Activated naive CD8-positive, alpha-beta T cell treated with anti-CD3 and anti-CD28 coated beads, Interleukin-2, amount 10 ng/mL, durations not matched to agents 7 days and 5 days (primary cell): ENCODE measurements at regions of chr12 and their contacts with region 1.

Region 1: GRCh38 chr12:47207340-47207717 is 127.6 kb upstream of the AMIGO2 start:
- DNase-seq: peak; percentile 62
- ATAC-seq: peak; percentile 67
- H3K4me3 Mint-ChIP-seq: peak overlapping the region; percentile 87
- H3K27ac Mint-ChIP-seq: peak overlapping the region; percentile 88
- H3K4me1 Mint-ChIP-seq: peaks cover 62% of the 10 kb centered on the region
- H3K27me3 Mint-ChIP-seq: no peaks in the 10 kb centered on the region

Region 2: DNA sequence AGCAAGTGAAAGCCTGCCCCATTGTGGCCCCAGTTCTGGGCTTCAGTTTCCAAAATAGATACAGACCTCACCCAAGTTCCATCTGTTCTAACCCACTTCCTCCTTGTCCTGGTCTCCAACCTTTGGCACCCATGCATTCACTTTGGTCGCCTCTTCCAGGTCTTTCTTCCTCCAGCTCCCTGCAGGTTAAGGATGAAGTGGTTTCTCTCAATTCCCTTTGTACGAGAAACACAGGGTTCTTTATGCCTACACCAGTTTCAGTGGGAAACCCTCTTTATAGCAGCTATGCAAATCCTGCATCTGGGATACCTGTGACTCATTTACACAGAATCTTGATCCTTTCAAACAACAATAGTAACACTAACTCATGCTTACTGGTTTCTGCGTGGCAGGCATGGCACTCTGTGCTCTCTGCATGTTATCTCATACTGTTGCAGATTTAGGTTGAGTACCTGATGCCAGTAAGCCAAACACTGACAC is 17.0 kb before region 1 on chr12:
- POLR2A ChIA-PET with region 1: interaction called, 59 read pairs
- DNase-seq: no peak
- ATAC-seq: no peak
- H3K4me3 Mint-ChIP-seq: no peak overlapping the region
- H3K27ac Mint-ChIP-seq: peak overlapping the region; percentile 56
- H3K4me1 Mint-ChIP-seq: peaks cover 63% of the 10 kb centered on the region
- H3K27me3 Mint-ChIP-seq: no peaks in the 10 kb centered on the region

Region 3: GRCh38 chr12:47296828-47297227 is 89.5 kb after region 1 on chr12:
- POLR2A ChIA-PET with region 1: no interaction called
- DNase-seq: no peak
- ATAC-seq: no peak
- H3K4me3 Mint-ChIP-seq: no peak overlapping the region
- H3K27ac Mint-ChIP-seq: no peak overlapping the region
- H3K4me1 Mint-ChIP-seq: peaks cover 40% of the 10 kb centered on the region
- H3K27me3 Mint-ChIP-seq: no peaks in the 10 kb centered on the region